Heart left ventricle (tissue), 16 donors: ENCODE measurements at regions of chr14 and their contacts with region 1.

Region 1: DNA sequence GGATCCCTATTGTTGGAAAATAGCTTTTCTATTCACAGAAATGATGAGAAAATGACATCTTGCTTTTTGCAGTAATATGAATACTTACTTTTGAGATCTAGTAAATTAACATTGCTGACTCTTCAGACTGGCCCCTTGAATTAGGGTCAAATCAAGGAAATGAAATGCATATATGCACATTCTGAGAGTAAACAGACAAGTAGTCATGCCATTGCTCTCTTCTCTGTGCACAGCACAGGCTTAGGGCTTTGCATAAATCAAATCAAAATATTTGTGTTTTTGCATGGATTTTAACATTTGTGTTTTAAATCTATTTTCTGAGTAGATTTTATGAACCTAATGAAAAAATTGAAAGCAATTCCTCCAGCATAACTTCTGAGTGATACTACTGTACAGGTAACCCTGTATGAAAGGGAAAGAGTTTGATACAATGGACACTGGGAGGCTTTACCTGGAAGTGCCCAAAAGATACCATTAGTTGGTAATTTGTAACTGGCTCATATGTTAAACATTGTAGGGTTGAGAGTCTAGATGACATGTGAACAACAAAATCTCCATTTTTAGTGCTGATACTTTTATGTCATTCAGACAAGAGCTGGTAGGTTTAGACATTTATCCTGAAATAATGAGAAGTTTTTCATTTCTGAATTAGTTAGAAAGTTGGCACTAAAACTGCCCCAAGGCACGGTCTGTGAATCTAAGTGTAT is 280.2 kb upstream of the FBXO33 start:
- DNase-seq: no peak
- ATAC-seq: no peak
- H3K4me3 ChIP-seq: no peak overlapping the region
- H3K27ac ChIP-seq: no peak overlapping the region
- H3K4me1 ChIP-seq: no peaks in the 10 kb centered on the region
- H3K27me3 ChIP-seq: no peaks in the 10 kb centered on the region
- CTCF ChIP-seq: no peak
- POLR2A ChIP-seq: no peak

Region 2: DNA sequence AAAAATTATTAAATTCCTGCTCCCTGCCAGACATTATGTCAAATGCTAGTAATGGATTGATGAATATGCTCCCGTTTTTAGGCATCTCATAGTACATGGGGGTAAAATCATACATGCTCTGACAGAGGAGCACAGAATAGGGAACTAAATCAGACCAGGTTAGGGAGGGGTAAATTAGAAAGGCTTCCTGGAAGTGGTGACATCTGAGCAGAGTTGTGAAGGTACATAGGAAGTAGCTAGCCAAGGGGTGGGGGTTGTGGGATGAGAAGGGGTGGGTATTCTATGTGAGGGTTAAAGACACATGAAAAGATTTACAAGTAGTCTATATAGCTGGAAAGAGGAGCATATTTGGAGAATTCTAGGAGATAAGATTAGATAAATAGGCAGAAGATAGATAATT is 108.5 kb before region 1 on chr14:
- intact Hi-C with region 1: no loop called
- DNase-seq: no peak
- ATAC-seq: no peak
- H3K4me3 ChIP-seq: no peak overlapping the region
- H3K27ac ChIP-seq: no peak overlapping the region
- H3K4me1 ChIP-seq: no peaks in the 10 kb centered on the region
- H3K27me3 ChIP-seq: no peaks in the 10 kb centered on the region
- CTCF ChIP-seq: no peak
- POLR2A ChIP-seq: no peak

Region 3: GRCh38 chr14:40204441-40205175 is 492.2 kb after region 1 on chr14:
- intact Hi-C with region 1: loop called in 1 of 10 experiments (anchors 5 kb)
- DNase-seq: no peak
- ATAC-seq: no peak
- H3K4me3 ChIP-seq: no peak overlapping the region
- H3K27ac ChIP-seq: no peak overlapping the region
- H3K4me1 ChIP-seq: no peaks in the 10 kb centered on the region
- H3K27me3 ChIP-seq: no peaks in the 10 kb centered on the region
- CTCF ChIP-seq: no peak
- POLR2A ChIP-seq: no peak

Region 4: DNA sequence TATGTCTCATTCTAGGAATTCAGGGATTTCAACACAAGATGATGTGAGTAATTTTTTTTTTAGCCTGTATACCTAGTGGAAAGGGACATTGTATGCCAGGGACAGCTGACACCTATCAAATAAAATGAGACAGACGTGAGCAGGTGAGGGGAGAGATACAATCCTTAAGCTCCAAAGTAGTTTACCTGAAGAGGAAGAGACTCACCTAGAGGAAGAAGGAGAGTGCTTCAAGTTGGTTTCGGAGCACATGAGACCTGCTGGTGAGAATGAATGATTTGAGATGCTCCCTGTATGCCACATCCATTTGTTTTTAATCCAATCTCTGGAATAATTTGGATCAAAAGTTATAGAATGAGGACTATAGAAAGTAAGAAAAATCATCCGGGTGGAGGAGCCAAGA is 635.2 kb after region 1 on chr14:
- intact Hi-C with region 1: no loop called
- DNase-seq: no peak
- ATAC-seq: no peak
- H3K4me3 ChIP-seq: no peak overlapping the region
- H3K27ac ChIP-seq: no peak overlapping the region
- H3K4me1 ChIP-seq: no peaks in the 10 kb centered on the region
- H3K27me3 ChIP-seq: no peaks in the 10 kb centered on the region
- CTCF ChIP-seq: no peak
- POLR2A ChIP-seq: no peak

Region 5: GRCh38 chr14:40574780-40575179 is 862.3 kb after region 1 on chr14:
- intact Hi-C with region 1: no loop called
- DNase-seq: no peak
- ATAC-seq: no peak
- H3K4me3 ChIP-seq: no peak overlapping the region
- H3K27ac ChIP-seq: no peak overlapping the region
- H3K4me1 ChIP-seq: no peaks in the 10 kb centered on the region
- H3K27me3 ChIP-seq: no peaks in the 10 kb centered on the region
- CTCF ChIP-seq: no peak
- POLR2A ChIP-seq: no peak